Naive thymus-derived CD4-positive, alpha-beta T cell (primary cell): ENCODE measurements at regions of chr7 and their contacts with region 1.

Region 1: DNA sequence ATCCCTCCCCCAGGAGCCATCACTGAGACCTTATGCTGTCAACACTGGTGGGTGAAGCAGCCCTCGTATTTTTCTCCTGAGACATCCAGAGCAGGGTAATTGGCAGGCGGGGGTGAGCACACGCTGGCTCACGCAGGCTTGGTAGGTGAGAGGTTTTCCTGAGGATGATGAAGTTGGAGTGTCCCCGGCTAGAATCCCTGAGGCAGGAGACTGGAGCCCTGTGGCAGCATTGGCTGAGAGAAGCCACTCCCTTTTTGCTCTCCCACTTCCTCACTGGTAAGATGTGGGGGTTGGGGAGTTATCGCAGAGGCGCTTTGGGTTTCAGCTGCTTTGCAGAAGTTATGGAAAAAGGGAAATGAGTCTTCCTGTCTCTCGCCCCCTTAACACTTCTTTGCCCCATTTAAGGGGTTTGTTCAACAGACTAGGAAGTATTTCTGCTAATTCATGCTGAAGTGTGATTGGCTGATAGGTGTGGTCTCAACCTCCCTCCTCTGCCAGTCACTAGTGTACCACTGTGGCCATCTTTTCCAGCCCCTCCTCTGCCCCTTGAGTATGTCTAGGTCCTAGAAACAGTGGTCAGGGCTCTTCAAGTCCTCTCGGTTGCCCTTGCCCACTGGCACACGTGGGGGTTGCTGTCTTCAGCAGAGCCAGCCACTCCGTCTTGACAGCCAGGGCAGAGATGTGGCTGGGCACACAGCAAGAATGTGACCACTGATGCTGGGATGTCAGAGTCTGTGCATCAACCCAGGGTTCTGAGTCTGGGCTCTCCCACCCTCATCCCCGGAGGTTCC is 5.7 kb downstream of the ARPC1B start:
- DNase-seq: peak in 7 of 9 donors; percentile 21 to 37 (median 30)
- ATAC-seq: peak; percentile 15
- H3K4me3 ChIP-seq: peak overlapping the region; percentile 78
- H3K4me3 Mint-ChIP-seq: peak overlapping the region; percentile 78 to 91 (median 84)
- H3K27ac ChIP-seq: peak overlapping the region; percentile 96
- H3K27ac Mint-ChIP-seq: peak overlapping the region; percentile 87 to 99 (median 98)
- H3K4me1 ChIP-seq: peaks cover 44 to 68% of the 10 kb centered on the region in 2 donors
- H3K4me1 Mint-ChIP-seq: peaks cover 29 to 70% (median 60%) of the 10 kb centered on the region in 7 donors
- H3K27me3 ChIP-seq: no peaks in the 10 kb centered on the region
- H3K27me3 Mint-ChIP-seq: no peaks in the 10 kb centered on the region

Region 2: DNA sequence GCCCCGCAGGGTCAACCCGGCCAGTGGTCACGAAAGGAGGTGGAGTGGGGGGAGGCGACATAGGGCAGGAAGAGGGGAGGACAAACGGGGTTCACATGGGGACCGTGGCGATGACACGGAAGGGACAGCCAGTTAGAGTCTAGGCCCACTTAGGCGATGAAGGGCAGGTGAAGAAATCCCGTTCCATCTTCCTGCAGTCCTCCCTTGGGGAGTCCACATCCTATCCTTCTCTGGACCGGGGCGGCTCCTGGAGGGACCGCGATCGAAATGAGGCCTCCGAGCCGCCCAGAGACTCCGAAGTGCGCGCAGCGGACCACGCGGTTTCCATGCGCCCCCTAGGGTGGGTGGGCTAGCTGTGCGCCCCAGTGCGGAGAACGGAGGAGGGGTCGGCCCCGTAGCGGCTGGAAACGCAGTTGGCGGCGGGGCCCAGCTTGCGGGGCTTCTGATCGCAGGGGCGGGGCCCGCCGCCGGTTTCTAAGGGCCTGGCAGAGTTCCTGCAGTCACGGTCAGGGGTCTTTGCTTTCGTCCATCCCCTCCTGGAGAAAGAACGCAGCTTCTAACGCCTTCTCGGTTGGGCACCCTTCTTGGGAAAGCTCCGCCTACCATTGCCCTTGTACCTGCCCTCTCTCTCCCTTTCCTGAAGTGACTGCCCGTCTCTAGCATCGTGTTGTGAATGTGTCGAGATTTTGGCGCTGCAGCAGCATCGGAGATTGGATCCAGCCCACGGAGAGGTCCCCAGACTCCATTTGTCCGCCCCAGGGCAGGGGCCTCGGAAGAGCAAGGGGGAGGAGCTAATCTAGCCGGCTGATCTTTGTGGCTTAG is 199.9 kb after region 1 on chr7:
- CTCF ChIA-PET with region 1: no interaction called
- POLR2A ChIA-PET with region 1: no interaction called
- intact Hi-C with region 1: loop called in 1 of 2 experiments (anchors 5 kb)
- DNase-seq: peak; percentile 40 to 60 (median 53)
- ATAC-seq: peak; percentile 85
- H3K4me3 ChIP-seq: peak overlapping the region; percentile 77
- H3K4me3 Mint-ChIP-seq: peak overlapping the region; percentile 87 to 98 (median 94)
- H3K27ac ChIP-seq: peak overlapping the region; percentile 73
- H3K27ac Mint-ChIP-seq: peak overlapping the region; percentile 19 to 96 (median 86)
- H3K4me1 ChIP-seq: peaks cover 3 to 4% of the 10 kb centered on the region in 2 donors
- H3K4me1 Mint-ChIP-seq: peaks cover 0 to 24% (median 17%) of the 10 kb centered on the region in 7 donors
- H3K27me3 ChIP-seq: no peaks in the 10 kb centered on the region
- H3K27me3 Mint-ChIP-seq: peaks cover 0 to 3% (median 0%) of the 10 kb centered on the region in 5 donors